Activated T-helper 2 cell treated with anti-CD3 and anti-CD28 coated beads, Interferon-gamma antibody, Interleukin-2, Interleukin-4, amounts not matched to agents 10 μg/mL and 5 μg/mL and 100 μg/mL, durations not matched to agents 14 hours and 24 hours and 36 hours (primary cell): ENCODE measurements at regions of chr19 and their contacts with region 1.

Region 1: GRCh38 chr19:48445606-48446481 is at the start of gene GRWD1:
- DNase-seq: peak; percentile 95
- H3K4me3 Mint-ChIP-seq: peak within 1 kb of the TSS; percentile 93
- H3K27ac Mint-ChIP-seq: peak within 1 kb of the TSS; percentile 86
- H3K4me1 Mint-ChIP-seq: peaks cover 26% of the 10 kb centered on the region
- H3K27me3 Mint-ChIP-seq: peaks cover 21% of the 10 kb centered on the region
- total RNA-seq, gene GRWD1: 77.6 and 77.8 TPM in 2 replicates

Region 2: GRCh38 chr19:47973529-47973928 is 472.3 kb before region 1 on chr19:
- intact Hi-C with region 1: no loop called
- DNase-seq: no peak
- H3K4me3 Mint-ChIP-seq: no peak overlapping the region
- H3K27ac Mint-ChIP-seq: no peak overlapping the region
- H3K4me1 Mint-ChIP-seq: no peaks in the 10 kb centered on the region
- H3K27me3 Mint-ChIP-seq: peaks cover 13% of the 10 kb centered on the region

Region 3: DNA sequence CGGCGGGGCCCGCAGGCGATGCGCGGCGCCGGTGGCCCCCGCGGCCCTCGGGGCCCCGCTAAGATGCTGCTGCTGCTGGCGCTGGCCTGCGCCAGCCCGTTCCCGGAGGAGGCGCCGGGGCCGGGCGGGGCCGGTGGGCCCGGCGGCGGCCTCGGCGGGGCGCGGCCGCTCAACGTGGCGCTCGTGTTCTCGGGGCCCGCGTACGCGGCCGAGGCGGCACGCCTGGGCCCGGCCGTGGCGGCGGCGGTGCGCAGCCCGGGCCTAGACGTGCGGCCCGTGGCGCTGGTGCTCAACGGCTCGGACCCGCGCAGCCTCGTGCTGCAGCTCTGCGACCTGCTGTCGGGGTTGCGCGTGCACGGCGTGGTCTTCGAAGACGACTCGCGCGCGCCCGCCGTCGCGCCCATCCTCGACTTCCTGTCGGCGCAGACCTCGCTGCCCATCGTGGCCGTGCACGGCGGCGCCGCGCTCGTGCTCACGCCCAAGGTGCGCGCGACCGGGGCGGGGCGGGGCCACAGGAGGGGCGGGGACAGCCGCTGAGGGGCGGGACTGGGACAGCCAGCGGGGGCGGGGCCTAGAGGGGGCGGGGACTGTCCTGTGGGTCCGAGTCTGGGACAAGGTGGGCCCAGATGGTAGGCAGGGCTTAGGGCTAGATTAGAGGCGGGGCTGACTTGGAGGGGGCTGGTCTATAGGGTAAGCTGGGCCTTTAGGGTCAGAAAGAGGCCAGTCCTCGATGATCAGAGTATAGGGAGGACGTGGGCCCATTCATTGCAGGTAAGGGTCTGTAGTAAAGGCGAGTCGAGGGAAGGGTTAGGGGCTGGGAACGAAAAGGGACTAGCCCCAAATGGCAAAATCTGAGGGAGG is 47.2 kb before region 1 on chr19:
- intact Hi-C with region 1: loop called (anchors 5 kb)
- DNase-seq: peak; percentile 84
- H3K4me3 Mint-ChIP-seq: no peak overlapping the region
- H3K27ac Mint-ChIP-seq: no peak overlapping the region
- H3K4me1 Mint-ChIP-seq: peaks cover 28% of the 10 kb centered on the region
- H3K27me3 Mint-ChIP-seq: peaks cover 34% of the 10 kb centered on the region

Region 4: GRCh38 chr19:48419158-48419920 is 26.5 kb before region 1 on chr19:
- intact Hi-C with region 1: loop called (anchors 2 kb)
- DNase-seq: peak; percentile 67
- H3K4me3 Mint-ChIP-seq: peak overlapping the region; percentile 67
- H3K27ac Mint-ChIP-seq: peak overlapping the region; percentile 93
- H3K4me1 Mint-ChIP-seq: peaks cover 20% of the 10 kb centered on the region
- H3K27me3 Mint-ChIP-seq: peaks cover 10% of the 10 kb centered on the region

Region 5: DNA sequence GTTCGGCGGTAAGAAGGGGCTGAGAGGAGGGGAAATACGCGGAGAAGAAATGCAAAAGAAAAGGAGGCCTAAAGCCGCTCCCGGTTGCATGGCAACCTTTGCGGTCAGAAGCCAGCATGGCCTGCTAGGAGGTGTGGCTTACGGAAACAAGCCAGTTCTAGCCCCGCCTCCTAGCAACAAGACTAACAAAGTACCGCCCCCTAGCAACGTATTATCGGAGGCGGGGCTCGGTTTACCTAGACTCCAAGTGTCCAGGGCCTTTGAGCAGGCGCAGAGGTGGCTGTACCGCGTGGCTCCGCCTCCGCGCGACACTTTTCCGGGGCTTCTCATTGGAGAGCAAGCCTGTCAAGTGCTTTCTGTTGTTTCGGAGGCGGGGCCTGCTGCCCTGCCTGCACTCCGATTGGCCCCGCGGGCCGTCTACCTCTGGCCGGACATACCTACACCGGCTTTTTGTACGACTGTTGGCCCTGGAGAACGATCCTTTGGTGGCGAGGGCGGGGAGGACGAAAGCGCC is 23.0 kb after region 1 on chr19:
- intact Hi-C with region 1: loop called (anchors 1 kb)
- DNase-seq: peak; percentile 100
- H3K4me3 Mint-ChIP-seq: peak overlapping the region; percentile 82
- H3K27ac Mint-ChIP-seq: peak overlapping the region; percentile 75
- H3K4me1 Mint-ChIP-seq: peaks cover 9% of the 10 kb centered on the region
- H3K27me3 Mint-ChIP-seq: no peaks in the 10 kb centered on the region

Region 6: DNA sequence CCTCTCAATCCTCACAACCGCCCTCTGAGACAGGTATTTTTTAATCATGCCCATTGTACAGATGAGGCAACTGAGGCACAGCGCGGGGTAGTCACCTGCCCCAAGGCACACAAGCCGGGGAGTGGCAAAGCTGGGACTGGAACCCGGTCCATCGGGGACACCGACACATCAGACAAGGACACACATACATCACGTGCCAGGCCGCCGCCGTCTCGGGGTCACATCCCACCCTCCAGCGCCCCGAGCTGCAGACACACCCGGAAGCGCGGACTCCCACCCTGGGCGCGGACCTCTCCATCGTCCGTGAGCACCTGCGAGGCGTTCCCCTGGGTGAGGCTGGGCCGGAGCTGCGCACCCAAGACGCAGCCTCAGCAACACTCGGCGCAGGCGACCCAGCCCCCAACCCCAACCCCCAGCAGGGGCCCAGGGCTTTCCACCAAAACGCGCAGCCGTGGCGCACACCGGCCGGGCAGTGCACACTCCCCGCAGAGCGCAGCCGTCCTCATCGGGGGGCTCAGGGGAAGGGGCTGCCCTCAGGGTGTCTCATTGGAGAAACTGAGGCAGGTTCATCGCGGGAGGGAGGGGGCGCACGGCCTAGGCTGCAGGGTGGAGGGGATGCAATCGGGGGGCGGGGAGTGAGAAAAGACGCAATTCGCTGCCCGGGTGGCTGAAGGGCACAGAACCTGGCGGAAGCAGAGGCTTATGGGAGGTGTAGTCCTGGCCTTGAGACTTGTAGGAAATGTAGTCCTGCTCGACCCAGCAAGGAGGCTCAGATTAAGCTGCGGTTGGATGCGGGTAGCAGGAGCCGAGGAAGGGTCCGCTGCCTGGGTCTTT is 67.7 kb after region 1 on chr19:
- intact Hi-C with region 1: loop called (anchors 2 kb)
- DNase-seq: peak; percentile 66
- H3K4me3 Mint-ChIP-seq: no peak overlapping the region
- H3K27ac Mint-ChIP-seq: peak overlapping the region; percentile 39
- H3K4me1 Mint-ChIP-seq: peaks cover 13% of the 10 kb centered on the region
- H3K27me3 Mint-ChIP-seq: no peaks in the 10 kb centered on the region